ENCODE measurements at regions of chr15 and their contacts with region 1.

Region 1: DNA sequence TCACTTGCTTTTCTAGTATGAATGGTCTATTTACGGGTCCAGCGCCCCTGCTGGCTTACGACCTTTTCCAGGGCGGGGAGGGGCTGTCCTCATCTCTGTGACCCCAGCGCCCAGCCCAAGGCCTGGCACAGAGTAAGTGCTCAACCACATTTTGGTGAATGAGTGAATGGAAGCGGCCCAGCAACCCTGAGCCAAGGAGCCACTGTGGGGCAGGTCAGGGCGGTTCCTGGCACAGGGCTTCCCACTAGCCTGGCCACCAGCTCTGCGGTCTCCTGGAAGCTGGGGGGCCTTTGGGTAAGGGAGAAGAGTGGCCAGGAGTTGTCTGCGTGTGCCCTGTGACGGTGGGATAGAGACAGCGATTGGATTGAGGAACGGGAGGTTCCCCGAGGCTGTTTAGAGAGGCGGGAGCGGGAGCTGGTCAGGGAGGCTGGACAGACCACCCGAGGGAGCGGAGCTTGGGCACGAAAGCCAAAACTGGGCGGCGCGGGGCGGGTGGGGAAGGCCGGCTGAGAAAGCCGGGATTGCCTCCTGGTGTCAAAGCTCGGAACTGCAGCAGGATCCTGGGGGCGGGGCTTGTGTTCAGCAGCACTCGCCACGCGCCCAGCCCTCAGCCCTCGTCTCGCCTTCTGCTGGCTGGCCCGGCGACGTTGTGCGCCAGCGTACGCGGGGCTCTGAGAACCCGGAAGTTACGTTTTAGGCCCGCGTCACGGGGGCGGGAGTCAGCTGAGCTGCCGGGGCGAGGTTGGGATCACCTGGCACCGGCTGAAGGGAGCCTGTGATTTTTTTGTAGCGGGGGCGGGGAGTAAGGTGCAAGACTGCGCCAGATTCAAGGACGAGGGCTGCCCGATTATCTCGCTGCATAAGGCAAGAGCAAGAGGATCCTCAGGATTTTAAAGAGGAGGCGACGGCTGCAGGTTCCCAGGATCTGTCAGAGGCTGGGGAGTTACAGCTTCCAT is at the start of gene VPS18:
- DNase-seq: peak; percentile 98
- H3K4me3 ChIP-seq: peak within 1 kb of the TSS; percentile 90
- H3K27ac ChIP-seq: peak within 1 kb of the TSS; percentile 31
- H3K4me1 ChIP-seq: peaks cover 36% of the 10 kb centered on the region
- CTCF ChIP-seq: peak; percentile 76
- total RNA-seq, gene VPS18: 24.5 and 26.2 TPM in 2 replicates

Region 2: DNA sequence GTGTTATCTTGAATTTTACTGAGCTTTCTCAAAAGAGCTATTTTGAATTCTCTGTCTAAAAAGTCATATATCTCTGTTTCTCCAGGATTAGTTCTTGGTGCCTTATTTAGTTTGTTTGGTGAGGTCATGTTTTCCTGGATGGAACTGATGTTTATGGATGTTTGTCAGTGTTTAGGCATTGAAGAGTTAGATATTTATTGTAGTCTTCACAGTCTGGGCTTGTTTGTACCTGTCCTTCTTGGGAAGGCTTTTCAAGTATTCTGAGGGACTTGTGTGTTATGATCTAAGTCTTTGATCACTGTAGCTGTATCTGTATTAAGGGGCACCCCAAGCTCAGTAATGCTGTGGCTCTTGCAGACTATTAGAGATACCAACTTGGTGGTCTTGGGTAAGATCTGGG is 209.6 kb before region 1 on chr15:
- CTCF ChIA-PET with region 1: interaction called, 5 read pairs
- POLR2A ChIA-PET with region 1: no interaction called
- intact Hi-C with region 1: loop called (anchors 5 kb)
- DNase-seq: no peak
- H3K4me3 ChIP-seq: no peak overlapping the region
- H3K27ac ChIP-seq: no peak overlapping the region
- H3K4me1 ChIP-seq: peaks cover 16% of the 10 kb centered on the region
- CTCF ChIP-seq: no peak

Region 3: GRCh38 chr15:40743921-40744814 is 149.8 kb before region 1 on chr15:
- CTCF ChIA-PET with region 1: no interaction called
- POLR2A ChIA-PET with region 1: no interaction called
- intact Hi-C with region 1: loop called (anchors 5 kb)
- DNase-seq: no peak
- H3K4me3 ChIP-seq: no peak overlapping the region
- H3K27ac ChIP-seq: no peak overlapping the region
- H3K4me1 ChIP-seq: peaks cover 4% of the 10 kb centered on the region
- CTCF ChIP-seq: 0 out of 2 replicates have a peak, but pooled peaks have one; percentile 15

Region 4: DNA sequence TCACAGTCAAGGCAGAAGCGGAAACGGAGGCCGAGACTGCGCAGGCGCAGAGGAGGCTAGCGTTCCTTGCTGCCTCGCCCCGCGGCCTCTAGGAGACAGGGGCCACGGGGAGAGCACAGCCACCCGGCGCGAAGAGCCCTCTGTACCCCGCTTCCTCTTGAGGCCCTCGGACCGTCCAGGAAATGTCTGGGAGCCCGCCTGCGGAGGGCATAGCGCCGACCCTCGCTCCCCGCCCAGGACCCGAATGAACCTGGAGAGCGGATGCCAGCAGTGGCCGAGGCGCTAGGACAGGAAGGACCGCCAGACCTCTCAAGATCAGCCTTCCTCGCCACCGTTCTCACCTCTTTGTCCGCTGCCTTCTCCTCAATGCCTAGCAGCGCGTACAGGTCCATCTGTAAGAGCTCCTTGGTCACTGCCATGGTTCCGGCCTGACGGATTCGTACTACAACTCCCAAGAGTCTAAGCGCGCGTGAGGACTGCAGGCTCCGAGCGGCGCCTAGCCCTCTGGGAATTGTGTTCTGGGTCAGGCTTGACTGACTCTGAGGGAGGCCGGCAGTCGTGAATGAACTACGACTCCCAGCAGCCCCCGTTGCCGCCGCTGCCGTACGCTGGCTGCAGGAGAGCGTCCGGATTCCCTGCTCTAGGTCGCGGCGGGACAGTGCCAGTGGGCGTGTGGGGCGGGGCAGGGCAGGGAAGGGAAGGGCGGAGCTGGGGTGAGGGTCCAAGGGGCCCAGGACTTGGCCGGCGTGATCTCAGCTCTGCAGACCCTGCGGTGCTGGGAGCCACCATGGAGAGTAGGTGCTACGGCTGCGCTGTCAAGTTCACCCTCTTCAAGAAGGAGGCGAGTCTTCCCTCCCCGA is 86.8 kb before region 1 on chr15 and contains the starts of genes DNAJC17 and ZFYVE19:
- CTCF ChIA-PET with region 1: no interaction called
- POLR2A ChIA-PET with region 1: interaction called, 4 read pairs
- intact Hi-C with region 1: loop called (anchors 1 kb)
- DNase-seq: peak; percentile 99
- H3K4me3 ChIP-seq: peak within 1 kb of the TSS; percentile 78
- H3K27ac ChIP-seq: peak within 1 kb of the TSS; percentile 76
- H3K4me1 ChIP-seq: peaks cover 19% of the 10 kb centered on the region
- CTCF ChIP-seq: no peak
- total RNA-seq, gene DNAJC17: 24.2 and 39.2 TPM in 2 replicates
- total RNA-seq, gene ZFYVE19: 24.3 and 29.3 TPM in 2 replicates

Region 5: DNA sequence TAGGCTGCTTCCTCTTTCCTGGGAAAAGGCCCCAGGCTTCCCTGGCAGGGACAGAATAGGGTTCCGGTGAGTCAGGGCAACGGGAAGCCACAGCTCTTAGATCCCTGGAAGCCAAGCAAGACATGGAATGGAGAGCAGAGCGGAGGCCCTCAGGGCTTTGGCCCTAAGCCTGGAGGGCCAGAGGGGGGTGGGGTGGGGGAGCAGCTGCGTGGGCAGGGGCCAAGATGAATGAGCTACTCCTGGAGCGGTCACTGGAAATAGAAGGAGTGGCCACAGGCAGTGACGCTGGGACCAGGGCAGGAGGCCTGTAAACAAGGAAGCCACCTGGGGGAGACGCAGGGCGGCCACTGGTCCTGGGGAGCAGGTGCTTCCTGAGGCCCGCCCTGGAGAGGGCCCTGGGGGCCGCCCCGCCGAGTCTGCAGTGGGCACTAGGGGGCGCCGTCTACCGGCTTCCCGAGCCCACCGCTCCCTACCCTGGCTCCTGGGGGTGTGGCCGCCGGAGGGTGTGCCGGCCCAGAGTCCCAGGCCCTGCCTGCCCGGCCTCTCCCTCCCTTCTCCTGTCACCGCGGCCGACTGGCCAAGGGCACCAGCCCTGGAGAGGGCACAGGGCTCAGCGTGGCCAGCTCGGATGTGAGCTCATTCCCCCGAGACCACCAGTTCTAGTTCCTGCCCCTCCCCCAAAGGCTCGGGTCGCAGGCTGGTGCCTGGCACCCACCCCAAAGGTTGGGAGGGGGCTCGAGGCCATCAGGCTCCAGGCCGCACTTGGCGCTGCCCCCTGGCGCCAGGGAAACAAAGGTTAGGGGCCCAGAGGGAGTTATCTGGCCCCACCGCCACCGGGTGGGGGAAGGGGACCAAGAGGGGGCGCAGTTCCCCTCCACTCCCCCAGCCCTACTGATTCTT is 12.3 kb after region 1 on chr15:
- CTCF ChIA-PET with region 1: interaction called, 15 read pairs
- POLR2A ChIA-PET with region 1: interaction called, 11 read pairs
- intact Hi-C with region 1: no loop called
- DNase-seq: peak; percentile 91
- H3K4me3 ChIP-seq: peak overlapping the region; percentile 66
- H3K27ac ChIP-seq: peak overlapping the region; percentile 72
- H3K4me1 ChIP-seq: peaks cover 69% of the 10 kb centered on the region
- CTCF ChIP-seq: peak; percentile 87

Measured in OCI-LY7 (cell line).